Activated CD4-positive, alpha-beta T cell treated with anti-CD3 and anti-CD28 coated beads for 36 hours (primary cell): ENCODE measurements at regions of chr20 and their contacts with region 1.

Region 1: DNA sequence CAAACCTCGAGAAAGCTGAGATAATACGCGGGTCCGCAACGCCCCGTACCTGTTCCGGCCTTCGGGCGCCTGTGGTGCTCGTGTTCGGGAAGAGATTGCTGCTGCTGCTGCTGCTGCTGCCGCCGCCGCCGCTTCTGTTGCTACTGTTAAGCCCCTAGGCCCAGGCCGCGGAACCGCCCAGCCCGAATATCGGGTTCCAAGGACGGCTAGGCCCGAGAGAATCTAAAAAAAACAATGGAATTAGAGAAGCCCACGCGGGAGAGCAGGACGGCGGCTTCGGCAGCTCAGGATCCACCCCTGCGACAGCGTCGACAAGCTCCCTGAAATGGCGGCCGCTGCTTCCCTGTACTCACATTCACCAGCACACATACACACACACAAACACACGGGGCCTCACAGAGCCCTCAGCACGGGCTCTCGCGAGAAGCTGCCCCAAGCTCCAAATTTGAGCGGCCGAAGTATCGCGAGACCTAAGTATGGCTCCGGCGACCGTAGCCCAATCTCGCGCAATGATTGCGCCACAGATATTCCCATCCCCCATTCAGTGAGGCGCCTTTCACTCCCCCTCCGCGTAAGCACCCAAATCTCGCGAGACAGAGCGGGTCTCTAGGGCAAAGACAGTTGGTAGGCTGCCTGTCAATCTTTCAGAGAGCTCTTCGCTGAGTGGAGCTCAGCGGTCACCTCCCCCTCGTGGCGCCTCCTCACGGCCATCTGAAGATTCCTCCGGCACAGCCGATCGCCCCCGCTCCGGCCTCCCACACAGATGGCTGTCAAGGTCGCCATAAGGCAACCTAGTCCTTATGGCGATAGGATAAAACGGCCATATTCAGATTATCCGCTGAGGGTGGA is at the start of gene RBM39:
- DNase-seq: peak; percentile 100
- ATAC-seq: peak; percentile 88
- H3K4me3 Mint-ChIP-seq: peak within 1 kb of the TSS; percentile 90
- H3K27ac Mint-ChIP-seq: peak within 1 kb of the TSS; percentile 100
- H3K4me1 Mint-ChIP-seq: peaks cover 45% of the 10 kb centered on the region
- H3K27me3 Mint-ChIP-seq: no peaks in the 10 kb centered on the region
- total RNA-seq, gene RBM39: 303 to 356 TPM

Region 2: DNA sequence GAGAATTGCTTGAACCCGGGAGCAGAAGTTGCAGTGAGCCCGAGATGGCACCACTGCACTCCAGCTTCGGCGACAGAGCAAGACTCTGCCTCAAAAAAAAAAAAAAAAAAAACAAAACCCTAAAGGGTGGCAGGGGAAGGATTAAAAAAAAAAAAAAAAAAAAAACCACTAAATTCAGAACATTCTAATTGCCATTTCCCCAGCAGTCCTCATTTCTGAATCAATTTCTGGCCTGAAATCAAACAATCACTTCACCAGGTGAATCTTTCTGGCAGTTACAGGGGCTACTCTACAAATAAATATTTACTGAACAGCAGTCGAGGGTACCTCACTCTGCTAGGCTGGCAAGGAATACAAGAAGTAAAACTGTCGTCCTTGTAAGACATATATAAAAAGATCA is 331.5 kb before region 1 on chr20:
- CTCF ChIA-PET with region 1: no interaction called
- POLR2A ChIA-PET with region 1: no interaction called
- intact Hi-C with region 1: loop called in 1 of 2 experiments (anchors 2 kb)
- DNase-seq: no peak
- ATAC-seq: no peak
- H3K4me3 Mint-ChIP-seq: peak overlapping the region; percentile 91
- H3K27ac Mint-ChIP-seq: peak overlapping the region; percentile 100
- H3K4me1 Mint-ChIP-seq: peaks cover 21% of the 10 kb centered on the region
- H3K27me3 Mint-ChIP-seq: no peaks in the 10 kb centered on the region

Region 3: DNA sequence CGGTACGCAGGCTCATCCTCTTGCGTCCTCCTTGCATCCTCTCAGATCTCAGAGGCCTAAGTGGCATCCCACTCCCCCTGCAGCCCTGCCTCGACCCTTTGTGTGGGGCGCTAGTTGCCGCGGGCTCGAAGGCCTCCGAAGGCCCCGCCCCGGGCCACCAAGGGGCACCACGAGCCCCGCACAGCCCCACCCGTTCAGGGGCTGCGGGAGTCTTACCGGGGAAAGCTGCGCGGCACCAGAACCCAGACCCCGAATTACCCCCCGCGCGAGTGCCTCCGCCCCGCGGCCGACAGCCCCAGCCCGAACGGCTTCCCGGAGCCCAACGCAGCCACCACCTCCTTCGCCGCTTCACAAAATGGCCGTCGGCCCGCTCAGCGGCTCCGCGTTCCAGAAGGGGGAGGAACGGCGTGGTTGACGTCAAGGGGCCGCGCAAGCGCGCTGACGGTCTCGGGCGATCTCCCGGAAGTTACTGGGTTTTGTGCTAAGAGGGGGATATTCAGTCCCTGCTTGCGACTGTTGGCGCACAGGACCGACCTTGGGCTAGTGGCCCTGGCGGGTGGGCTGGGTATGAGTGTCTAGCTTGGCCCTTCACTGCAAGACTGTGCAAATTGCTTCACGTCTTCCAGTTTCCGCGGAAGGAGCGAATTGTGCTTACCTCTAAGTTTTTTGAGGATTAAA is 77.4 kb before region 1 on chr20 and contains the starts of genes CPNE1 and RBM12:
- CTCF ChIA-PET with region 1: interaction called, 3 read pairs
- POLR2A ChIA-PET with region 1: interaction called, 38 read pairs
- intact Hi-C with region 1: loop called (anchors 1 to 2 kb)
- DNase-seq: peak; percentile 96
- ATAC-seq: peak; percentile 68
- H3K4me3 Mint-ChIP-seq: peak within 1 kb of the TSS; percentile 80
- H3K27ac Mint-ChIP-seq: peak within 1 kb of the TSS; percentile 100
- H3K4me1 Mint-ChIP-seq: peaks cover 36% of the 10 kb centered on the region
- H3K27me3 Mint-ChIP-seq: no peaks in the 10 kb centered on the region
- total RNA-seq, gene CPNE1: 249 to 258 TPM
- total RNA-seq, gene RBM12: 122 to 148 TPM

Region 4: DNA sequence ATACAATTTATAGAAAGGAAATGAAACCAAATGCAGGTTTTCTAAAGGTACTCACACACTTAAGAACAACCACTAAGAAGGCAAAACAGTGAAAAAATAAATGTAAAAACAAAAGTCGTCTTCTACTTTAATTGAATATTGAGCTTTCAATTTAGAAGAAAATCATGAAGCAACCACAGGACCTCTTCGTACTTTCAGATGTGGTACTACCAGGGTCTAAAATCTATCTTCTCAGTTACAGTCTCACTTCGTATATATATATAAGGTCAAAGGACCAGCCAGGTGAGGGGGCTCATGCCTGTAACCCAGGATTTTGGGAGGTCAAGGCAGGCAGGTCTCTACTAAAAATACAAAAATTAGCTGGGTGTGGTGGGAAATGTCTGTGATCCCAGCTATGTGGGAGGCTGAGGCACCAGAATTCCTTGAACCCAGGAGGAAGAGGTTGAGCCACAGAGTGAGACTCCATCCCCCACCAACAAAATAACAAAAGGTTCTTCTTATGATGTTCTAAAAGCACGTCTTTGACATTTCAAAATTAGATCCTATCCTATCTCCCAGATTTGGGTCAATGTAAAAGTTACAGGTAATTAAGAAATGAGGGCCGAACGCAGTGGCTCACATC is 30.4 kb before region 1 on chr20:
- CTCF ChIA-PET with region 1: interaction called, 6 read pairs
- POLR2A ChIA-PET with region 1: interaction called, 11 read pairs
- intact Hi-C with region 1: no loop called
- DNase-seq: no peak
- ATAC-seq: peak; percentile 76
- H3K4me3 Mint-ChIP-seq: peak overlapping the region; percentile 33
- H3K27ac Mint-ChIP-seq: peak overlapping the region; percentile 86
- H3K4me1 Mint-ChIP-seq: peaks cover 48% of the 10 kb centered on the region
- H3K27me3 Mint-ChIP-seq: no peaks in the 10 kb centered on the region

Region 5: DNA sequence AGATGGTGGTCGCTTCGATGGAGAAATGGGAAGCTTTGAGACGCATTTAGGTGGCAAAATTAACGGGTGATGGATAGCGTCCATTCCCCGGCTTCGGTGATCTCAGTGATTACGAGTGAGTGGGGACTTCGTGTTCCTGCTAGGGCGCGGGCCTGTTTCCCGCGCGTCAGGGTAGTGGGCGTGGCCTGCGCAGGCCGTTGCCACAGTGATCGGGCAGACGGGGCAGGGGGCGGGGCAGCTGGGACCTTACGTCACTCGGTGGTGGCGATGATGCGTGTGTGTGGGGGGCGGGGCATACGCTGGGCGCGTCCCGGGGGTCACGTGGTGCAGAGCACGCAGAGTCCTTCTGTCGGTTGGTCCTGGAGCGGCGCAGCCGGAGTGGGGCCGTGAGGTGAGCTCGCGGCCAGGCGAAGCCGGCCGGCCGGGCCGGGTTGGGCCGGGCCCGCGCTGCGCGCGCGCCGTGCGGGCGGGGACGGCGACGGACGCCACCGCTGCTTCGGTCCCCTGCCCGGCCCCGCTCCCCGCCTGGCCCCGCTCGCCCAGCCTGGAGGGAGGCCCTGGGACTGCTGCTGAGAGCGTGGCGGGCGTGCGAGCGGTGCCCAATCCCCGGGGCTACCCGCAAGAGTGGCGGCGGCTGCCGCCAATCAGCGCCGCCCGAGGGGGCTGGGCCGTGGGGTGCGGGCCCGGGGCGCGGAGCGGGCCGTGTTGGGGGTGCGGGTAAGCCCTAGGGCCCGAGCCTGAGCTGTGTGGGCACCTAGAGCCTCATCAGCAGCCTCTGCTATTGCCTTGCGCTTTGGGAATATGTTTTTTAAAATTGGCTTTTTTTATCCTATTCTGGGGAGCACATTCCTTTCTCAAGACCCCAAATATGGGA is 29.8 kb after region 1 on chr20 and contains the start of gene PHF20:
- CTCF ChIA-PET with region 1: interaction called, 28 read pairs
- POLR2A ChIA-PET with region 1: interaction called, 68 read pairs
- intact Hi-C with region 1: loop called (anchors 1 kb)
- DNase-seq: peak; percentile 100
- ATAC-seq: peak; percentile 91
- H3K4me3 Mint-ChIP-seq: peak within 1 kb of the TSS; percentile 81
- H3K27ac Mint-ChIP-seq: peak within 1 kb of the TSS; percentile 94
- H3K4me1 Mint-ChIP-seq: peaks cover 76% of the 10 kb centered on the region
- H3K27me3 Mint-ChIP-seq: no peaks in the 10 kb centered on the region
- total RNA-seq, gene PHF20: 54.3 to 61.6 TPM

Region 6: DNA sequence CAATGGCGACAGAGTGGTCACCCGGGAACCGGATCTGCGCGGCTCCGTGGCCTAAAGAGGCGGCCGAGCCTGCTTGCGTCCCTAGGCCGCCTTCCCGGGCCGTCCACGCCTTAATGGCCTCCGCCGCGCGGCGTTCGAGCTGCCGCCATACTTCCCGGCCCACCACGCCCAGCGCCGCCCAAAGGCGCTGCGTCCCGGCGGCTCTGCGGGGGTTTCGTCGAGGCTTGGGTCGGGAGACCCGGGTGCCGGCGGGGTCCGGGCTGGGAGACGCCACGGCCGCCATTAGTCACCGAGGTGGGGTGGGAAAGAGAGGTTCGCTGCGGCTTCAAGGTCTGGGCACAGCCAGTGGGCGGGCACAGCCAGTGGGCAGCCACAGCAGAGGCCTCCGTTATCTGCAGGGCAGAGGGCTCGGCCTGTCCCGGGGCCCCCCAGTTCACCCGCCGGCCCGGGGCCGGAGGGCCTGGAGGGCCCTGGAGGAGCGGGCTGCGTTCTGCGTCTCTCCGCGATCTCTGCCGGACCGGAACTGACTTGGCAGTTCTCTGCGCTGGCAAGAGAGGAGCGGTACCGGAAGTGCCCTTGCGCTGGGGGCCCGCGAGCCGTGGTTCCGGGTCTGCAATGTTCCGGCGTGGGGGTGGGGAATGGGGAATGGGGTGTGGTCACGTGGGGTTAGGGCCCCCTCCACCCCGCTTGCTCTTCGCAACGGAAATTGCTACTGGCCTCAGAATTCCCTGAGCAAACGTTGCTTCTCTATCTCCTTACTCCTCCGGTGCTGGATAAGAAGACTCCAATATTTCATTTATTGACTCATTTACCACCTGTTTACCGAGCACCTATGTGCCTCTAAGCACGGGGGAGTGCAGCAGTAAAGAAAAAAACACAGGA is 308.6 kb after region 1 on chr20:
- CTCF ChIA-PET with region 1: no interaction called
- POLR2A ChIA-PET with region 1: no interaction called
- intact Hi-C with region 1: loop called in 1 of 2 experiments (anchors 1 kb)
- DNase-seq: peak; percentile 95
- ATAC-seq: peak; percentile 98
- H3K4me3 Mint-ChIP-seq: peak overlapping the region; percentile 96
- H3K27ac Mint-ChIP-seq: peak overlapping the region; percentile 91
- H3K4me1 Mint-ChIP-seq: peaks cover 34% of the 10 kb centered on the region
- H3K27me3 Mint-ChIP-seq: no peaks in the 10 kb centered on the region